GM13976 (cell line): ENCODE measurements at regions of chr12 and their contacts with region 1.

Region 1: DNA sequence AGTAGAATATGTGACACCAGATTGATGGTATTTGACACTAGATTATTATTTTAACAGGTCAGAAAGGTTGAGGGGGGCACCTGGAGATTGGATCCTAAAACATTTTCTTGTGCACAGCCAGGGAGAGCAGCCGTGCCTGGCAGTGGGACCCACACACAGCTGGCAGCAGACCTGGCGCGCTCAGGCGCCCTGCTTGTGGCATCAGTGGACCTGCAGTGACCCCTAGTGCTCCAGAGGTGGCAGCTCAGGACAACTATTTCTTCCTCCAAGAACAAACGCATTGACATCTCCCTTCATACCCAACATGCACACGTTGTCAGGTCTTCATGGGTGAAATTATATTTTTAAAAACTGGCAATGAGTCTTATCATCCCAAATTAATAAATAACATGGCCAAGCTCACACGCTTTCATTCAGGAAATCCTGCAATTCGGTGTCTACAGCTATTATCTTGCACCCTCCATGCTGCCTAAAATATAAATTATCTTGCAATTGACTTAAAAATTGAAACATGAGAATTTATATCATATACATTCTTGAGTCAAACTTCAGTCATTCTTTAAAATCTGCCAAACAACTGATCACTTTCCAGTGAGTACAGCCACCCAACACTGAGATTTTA is 7.7 kb upstream of the TMEM132D start:
- DNase-seq: peak; percentile 76
- CTCF ChIP-seq: peak; percentile 74

Region 2: DNA sequence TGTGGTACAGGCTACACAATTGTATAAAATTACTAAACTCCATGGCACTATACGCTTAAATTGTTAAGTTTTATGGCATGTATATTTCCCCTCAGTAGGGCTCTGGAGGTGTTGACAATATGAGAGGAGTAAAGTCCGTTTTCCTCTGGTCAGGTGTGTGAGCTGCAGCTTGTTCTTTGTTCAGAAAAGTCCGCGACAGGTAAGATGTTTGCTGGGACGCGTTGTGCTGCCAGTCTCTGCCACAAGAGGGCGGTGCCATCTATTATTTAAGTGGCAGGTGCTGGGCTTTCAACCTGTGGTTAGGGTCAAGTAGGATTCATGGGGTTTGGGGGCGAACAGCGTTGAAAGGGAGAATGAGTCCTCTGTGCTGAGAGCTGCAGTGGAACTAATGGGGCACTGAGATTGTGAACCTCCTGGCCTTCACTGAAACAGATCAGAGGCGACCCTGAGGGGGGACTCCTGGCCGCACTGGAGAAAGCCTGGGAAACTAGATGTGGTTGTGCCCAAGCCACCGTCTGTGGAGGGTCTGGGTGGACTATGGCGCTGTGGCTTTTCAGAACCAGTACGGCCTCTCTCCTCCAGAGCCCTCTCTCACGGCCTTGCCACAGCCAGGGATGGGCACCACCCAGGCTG is 1266.8 kb before region 1 on chr12:
- in situ Hi-C with region 1: loop called (anchors 25 kb)
- DNase-seq: peak; percentile 71
- CTCF ChIP-seq: peak; percentile 78